ENCODE measurements at regions of chr2 and their contacts with region 1.

Region 1: DNA sequence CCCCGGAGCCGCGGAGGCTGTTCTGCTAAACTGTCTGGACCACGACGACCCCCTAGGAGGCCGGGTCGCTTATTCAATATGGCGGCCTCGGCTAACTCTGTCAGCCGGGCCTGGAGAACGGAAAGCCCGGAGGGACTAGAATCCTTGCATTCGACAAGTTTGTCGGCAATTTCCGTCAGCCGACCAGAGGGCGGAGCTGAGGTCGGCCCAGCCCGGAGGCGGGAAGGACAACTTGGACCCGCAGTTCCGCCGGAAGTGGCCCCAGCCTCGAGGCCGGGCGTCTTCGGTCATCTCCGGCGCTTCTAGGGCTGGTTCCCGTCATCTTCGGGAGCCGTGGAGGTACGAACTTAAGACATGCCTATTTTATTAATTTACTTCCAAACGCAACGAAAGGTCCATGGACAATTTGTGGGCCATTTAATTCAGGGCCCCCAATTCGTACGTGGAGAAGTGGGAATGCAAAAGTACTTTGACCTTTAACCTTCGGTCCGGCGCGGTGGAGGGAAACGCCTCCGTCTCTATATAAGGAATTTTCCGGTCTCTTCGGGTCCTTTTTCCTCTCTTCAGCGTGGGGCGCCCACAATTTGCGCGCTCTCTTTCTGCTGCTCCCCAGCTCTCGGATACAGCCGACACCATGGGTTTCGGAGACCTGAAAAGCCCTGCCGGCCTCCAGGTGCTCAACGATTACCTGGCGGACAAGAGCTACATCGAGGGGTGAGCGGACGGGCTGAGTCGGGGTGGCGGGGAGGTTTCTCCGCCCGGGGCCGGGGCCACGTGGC is at the starts of genes EEF1B2 and NDUFS1:
- DNase-seq: peak; percentile 95 to 99 (median 99)

Region 2: DNA sequence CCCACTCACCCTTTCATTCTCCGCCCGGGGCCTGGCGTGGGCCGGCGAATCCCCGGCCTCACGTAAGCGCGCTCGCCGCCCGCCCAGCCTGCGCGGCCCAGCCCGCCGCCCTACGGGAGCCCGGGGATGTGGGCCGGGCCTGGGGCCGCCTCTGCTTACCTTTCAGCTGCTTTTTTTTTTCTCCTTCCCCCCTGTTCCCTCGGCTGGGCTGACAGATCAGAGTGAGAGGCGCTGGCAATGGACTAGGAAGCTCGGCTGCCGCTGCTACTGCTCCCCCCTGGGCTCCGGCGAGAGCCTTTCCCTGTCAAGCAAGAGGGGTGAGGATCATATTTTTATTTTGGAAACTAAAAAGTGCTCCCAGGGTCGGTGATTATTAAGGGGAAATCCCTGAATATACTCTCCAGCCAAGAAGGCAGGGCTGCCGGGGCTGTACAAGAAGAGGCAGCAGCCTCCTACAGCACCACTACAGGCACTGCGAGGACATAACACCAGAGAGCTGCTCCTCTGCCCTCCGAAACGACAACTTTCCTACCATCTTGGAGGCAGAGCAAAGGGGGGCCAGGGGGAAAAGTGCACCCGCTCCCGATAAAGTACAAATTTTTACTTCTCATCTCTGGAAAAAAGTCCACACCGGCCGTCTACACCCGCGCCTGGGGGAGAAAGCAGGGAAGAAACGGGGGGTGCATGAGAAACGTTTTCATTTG is 73.6 kb before region 1 on chr2 and contains the start of gene INO80D:
- intact Hi-C with region 1: loop called (anchors 5 kb)
- DNase-seq: peak; percentile 59 to 92 (median 78)

Region 3: DNA sequence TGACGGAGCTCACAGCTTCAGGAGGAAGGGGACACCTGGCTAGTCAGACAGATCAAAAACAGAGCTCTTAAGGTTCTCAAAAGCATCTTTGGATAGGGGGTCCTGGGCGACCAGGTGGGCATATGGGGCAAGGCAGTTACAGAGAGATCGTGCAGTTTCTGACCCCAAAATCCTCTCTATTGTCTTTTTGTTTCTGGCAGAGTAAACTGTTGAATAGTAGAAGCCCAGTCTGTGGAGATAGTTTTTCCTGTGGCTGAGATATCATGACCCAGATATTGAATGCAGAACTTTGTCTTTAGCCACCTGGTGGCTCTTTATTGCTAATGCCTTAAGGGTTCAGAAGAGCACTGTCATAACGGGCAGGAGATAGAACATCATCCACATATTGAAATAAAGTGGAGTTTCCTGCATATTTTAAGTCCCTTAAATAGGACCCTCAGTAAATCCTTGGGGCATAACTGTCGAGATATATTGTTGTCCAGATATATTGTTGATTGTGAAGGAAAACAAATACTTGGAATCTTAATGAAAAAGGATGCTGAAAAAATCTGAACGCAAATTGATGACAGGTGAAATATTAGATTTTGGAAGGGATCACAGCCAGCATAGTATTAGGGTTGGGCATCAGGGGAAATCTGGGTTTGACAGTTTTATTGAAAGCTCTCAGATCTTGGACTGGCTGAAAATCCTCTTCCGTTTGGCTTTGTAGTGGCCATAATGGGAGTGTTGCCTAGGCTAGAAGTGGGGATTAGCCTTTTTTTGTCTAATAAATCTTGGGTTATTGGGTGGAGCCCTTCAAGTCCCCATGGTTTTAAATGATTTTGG is 100.9 kb after region 1 on chr2:
- intact Hi-C with region 1: loop called (anchors 10 kb)
- DNase-seq: no peak

Region 4: DNA sequence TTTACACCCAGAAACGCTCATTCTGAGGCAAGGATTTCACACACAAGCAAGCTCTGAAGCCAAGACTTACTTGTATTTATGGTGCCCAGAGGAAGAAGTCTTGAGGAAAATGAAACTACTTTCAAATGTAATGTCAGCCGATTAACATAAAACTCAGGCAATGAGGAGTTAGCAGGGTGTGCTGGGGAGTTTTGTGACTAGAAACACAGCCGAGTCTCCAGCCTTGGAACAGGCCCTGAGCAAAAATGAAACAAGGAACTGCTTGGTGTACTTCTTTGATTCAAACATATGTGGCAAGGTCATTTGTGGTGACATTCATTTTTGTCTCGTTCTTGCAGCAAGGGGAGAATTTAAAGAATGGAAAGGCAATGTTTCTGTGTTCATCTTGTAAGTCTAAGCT is 554.2 kb after region 1 on chr2:
- intact Hi-C with region 1: no loop called
- DNase-seq: peak in 1 of 42 donors; percentile 1